ENCODE measurements at regions of chr12 and their contacts with region 1.

Region 1: GRCh38 chr12:4763549-4763948 is 43.3 kb downstream of the GALNT8 start:
- DNase-seq: no peak
- H3K4me3 ChIP-seq: no peak overlapping the region
- H3K27ac ChIP-seq: no peak overlapping the region
- H3K4me1 ChIP-seq: no peaks in the 10 kb centered on the region
- H3K27me3 ChIP-seq: no peaks in the 10 kb centered on the region
- CTCF ChIP-seq: no peak
- POLR2A ChIP-seq: no peak

Region 2: DNA sequence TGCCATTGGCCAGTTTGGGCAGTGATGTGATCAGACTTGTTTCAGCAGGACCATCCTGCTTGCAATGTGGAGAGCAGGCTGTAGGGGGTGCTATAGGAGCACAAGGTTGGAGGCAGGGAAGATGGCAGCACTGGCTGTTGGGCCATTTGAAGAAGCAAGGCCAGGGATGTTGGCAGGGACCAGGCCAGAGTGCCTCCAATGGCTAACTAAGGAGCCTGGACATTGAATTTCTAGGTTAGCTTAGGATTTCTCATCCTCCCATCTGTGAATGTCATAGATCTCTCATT is 407.6 kb before region 1 on chr12:
- intact Hi-C with region 1: loop called (anchors 10 kb)
- DNase-seq: no peak
- H3K4me3 ChIP-seq: no peak overlapping the region
- H3K27ac ChIP-seq: no peak overlapping the region
- H3K4me1 ChIP-seq: no peaks in the 10 kb centered on the region
- H3K27me3 ChIP-seq: no peaks in the 10 kb centered on the region
- CTCF ChIP-seq: peak in 1 of 4 experiments; percentile 7
- POLR2A ChIP-seq: no peak

Region 3: GRCh38 chr12:4604684-4605193 is 158.8 kb before region 1 on chr12:
- intact Hi-C with region 1: loop called (anchors 10 kb)
- DNase-seq: peak; percentile 84
- H3K4me3 ChIP-seq: peak overlapping the region; percentile 60 to 70
- H3K27ac ChIP-seq: peak overlapping the region; percentile 45 to 62
- H3K4me1 ChIP-seq: no peaks in the 10 kb centered on the region
- H3K27me3 ChIP-seq: no peaks in the 10 kb centered on the region
- CTCF ChIP-seq: peak; percentile 84 to 95 (median 93)
- POLR2A ChIP-seq: no peak